ENCODE measurements at regions of chr15 and their contacts with region 1.

Region 1: DNA sequence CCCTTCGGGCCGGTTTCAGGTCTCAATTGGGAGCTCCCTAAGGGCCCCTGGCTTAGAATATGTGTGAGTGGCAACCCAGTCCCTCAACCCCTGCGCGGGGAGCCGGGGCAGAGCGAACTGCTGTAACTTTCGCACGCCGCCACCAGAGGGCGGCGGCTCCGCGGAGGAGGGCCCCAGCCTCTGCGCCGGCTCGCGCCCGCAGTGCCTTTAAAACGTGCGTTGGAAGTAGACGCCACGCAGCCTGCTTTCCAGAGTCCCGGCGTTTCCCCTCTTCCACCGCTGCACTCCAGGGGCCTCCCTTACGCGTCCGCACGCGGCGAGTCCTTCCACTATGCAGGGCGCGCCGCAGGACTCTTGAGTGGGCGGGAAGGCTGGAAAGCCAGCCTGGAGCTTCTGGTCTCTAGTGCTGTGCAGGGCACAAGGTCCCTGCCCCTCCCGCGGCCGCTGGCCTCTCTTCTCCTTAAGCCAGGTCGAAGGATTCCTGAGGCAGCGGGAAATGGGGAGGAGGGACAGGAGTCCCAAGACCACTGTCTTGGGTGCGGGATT is 23.7 kb upstream of the RNU6-1 start:
- DNase-seq: peak; percentile 82 to 87
- ATAC-seq: peak; percentile 97
- H3K4me3 ChIP-seq: peak overlapping the region; percentile 40
- H3K27ac ChIP-seq: peak overlapping the region; percentile 78 to 89
- H3K4me1 ChIP-seq: peaks cover 10% of the 10 kb centered on the region; the same call in 2 of the 3 replicates
- CTCF ChIP-seq: peak; percentile 98
- EP300 ChIP-seq: no peak
- POLR2A ChIP-seq: peak; percentile 37; the same call in 1 of the 2 replicates
- RAD21 ChIP-seq: peak; percentile 96 to 100

Region 2: DNA sequence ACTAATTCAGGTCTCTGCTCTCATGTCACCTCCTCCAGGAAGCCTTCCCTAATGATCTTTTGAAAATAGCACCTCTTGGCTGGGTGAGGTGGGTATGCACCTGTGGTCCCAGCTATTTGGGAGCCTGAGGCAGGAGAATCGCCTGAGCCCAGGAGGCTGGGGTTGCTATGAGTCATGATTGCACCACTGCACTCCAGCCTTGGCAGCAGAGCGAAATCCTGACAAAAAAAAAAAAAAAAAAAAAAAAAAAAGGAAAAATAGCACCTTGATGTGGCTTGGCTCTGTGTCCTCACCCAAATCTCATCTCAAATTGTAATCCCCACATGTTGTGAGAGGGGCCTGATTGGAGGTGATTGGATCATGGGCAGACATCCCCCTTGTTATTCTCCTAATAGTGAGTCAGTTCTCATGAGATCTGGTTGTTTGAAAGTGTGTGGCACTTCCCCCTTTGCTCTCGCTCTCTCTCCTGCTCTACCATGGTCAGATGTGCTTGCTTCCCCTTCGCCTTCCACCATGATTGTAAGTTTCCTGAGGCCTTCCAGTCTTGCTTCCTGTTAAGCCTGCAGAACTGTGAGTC is 12.4 kb before region 1 on chr15:
- CTCF ChIA-PET with region 1: interaction called, 66 read pairs
- POLR2A ChIA-PET with region 1: no interaction called
- DNase-seq: no peak
- ATAC-seq: peak; percentile 61 to 83; a peak in 5 of 6 replicates
- H3K4me3 ChIP-seq: no peak overlapping the region
- H3K27ac ChIP-seq: peak overlapping the region; percentile 58 to 65
- H3K4me1 ChIP-seq: peaks cover 19% of the 10 kb centered on the region
- CTCF ChIP-seq: no peak
- EP300 ChIP-seq: no peak
- POLR2A ChIP-seq: no peak
- RAD21 ChIP-seq: no peak; a peak in 1 of 5 replicates

Region 3: GRCh38 chr15:67914537-67915460 is 51.3 kb after region 1 on chr15:
- CTCF ChIA-PET with region 1: interaction called, 55 read pairs
- POLR2A ChIA-PET with region 1: no interaction called
- DNase-seq: peak; percentile 60 to 93
- ATAC-seq: peak; percentile 80 to 81
- H3K4me3 ChIP-seq: peak overlapping the region; percentile 17; the same call in 2 of the 3 replicates
- H3K27ac ChIP-seq: peak overlapping the region; percentile 86 to 88
- H3K4me1 ChIP-seq: peaks cover 45% of the 10 kb centered on the region
- CTCF ChIP-seq: no peak
- EP300 ChIP-seq: no peak
- POLR2A ChIP-seq: no peak
- RAD21 ChIP-seq: peak in 1 of 2 experiments; percentile 44; a peak in 2 of 5 replicates

Region 4: GRCh38 chr15:68010361-68011153 is 147.0 kb after region 1 on chr15:
- CTCF ChIA-PET with region 1: interaction called, 10 read pairs
- POLR2A ChIA-PET with region 1: no interaction called
- DNase-seq: no peak
- ATAC-seq: no peak
- H3K4me3 ChIP-seq: no peak overlapping the region
- H3K27ac ChIP-seq: no peak overlapping the region
- H3K4me1 ChIP-seq: peaks cover 20% of the 10 kb centered on the region
- CTCF ChIP-seq: no peak
- EP300 ChIP-seq: no peak
- POLR2A ChIP-seq: no peak
- RAD21 ChIP-seq: no peak

Region 5: GRCh38 chr15:68075764-68076385 is 212.4 kb after region 1 on chr15:
- CTCF ChIA-PET with region 1: interaction called, 12 read pairs
- POLR2A ChIA-PET with region 1: no interaction called
- DNase-seq: no peak
- ATAC-seq: no peak
- H3K4me3 ChIP-seq: no peak overlapping the region
- H3K27ac ChIP-seq: no peak overlapping the region
- H3K4me1 ChIP-seq: no peaks in the 10 kb centered on the region; the same call in 2 of the 3 replicates
- CTCF ChIP-seq: no peak
- EP300 ChIP-seq: no peak
- POLR2A ChIP-seq: no peak
- RAD21 ChIP-seq: no peak

Region 6: GRCh38 chr15:68163191-68163590 is 299.7 kb after region 1 on chr15:
- CTCF ChIA-PET with region 1: interaction called, 206 read pairs
- POLR2A ChIA-PET with region 1: no interaction called
- DNase-seq: no peak
- ATAC-seq: no peak
- H3K4me3 ChIP-seq: no peak overlapping the region
- H3K27ac ChIP-seq: no peak overlapping the region
- H3K4me1 ChIP-seq: no peaks in the 10 kb centered on the region
- CTCF ChIP-seq: no peak
- EP300 ChIP-seq: no peak
- POLR2A ChIP-seq: no peak
- RAD21 ChIP-seq: no peak